CD4-positive, alpha-beta T cell (primary cell): ENCODE measurements at regions of chr3 and their contacts with region 1.

Region 1: DNA sequence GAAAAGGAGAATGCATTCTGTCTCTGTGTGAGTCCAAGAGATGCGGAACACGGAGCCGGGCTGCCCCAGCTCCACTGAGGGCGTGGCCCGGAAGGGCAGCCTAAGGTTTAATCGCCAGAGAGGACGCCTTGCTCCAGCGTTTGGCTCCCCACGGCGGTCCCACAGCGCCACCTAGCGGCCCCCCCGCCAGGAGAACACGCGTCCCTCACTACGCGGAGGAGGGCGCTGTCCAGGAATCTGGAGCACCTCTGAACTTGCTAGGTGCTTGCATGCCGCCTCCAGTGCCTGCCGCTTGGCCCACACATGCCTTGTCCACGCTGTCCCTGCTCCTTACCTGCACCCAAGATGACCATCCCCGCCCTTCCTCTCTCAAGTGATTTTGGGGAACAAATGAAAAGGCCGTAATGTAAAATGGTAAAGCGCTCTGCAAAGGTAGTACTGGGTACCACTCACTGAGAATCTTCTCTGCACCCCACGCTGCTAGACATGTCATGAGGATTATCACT is 14.4 kb upstream of the MRPS22 start:
- DNase-seq: peak; percentile 74 to 91 (median 84)
- ATAC-seq: peak; percentile 97
- H3K4me3 ChIP-seq: peak overlapping the region; percentile 23
- H3K4me3 Mint-ChIP-seq: peak overlapping the region; percentile 27
- H3K27ac ChIP-seq: no peak overlapping the region
- H3K27ac Mint-ChIP-seq: no peak overlapping the region
- H3K4me1 ChIP-seq: peaks cover 9% of the 10 kb centered on the region
- H3K4me1 Mint-ChIP-seq: peaks cover 17% of the 10 kb centered on the region
- H3K27me3 ChIP-seq: peaks cover 10 to 20% of the 10 kb centered on the region in 2 experiments
- H3K27me3 Mint-ChIP-seq: peaks cover 38% of the 10 kb centered on the region
- CTCF ChIP-seq: peak; percentile 99

Region 2: GRCh38 chr3:138417559-138417982 is 911.8 kb before region 1 on chr3:
- CTCF ChIA-PET with region 1: no interaction called
- POLR2A ChIA-PET with region 1: no interaction called
- intact Hi-C with region 1: loop called in 1 of 2 experiments (anchors 2 kb)
- DNase-seq: peak; percentile 38 to 76 (median 49)
- ATAC-seq: peak; percentile 69
- H3K4me3 ChIP-seq: no peak overlapping the region
- H3K4me3 Mint-ChIP-seq: no peak overlapping the region
- H3K27ac ChIP-seq: no peak overlapping the region
- H3K27ac Mint-ChIP-seq: no peak overlapping the region
- H3K4me1 ChIP-seq: no peaks in the 10 kb centered on the region
- H3K4me1 Mint-ChIP-seq: no peaks in the 10 kb centered on the region
- H3K27me3 ChIP-seq: no peaks in the 10 kb centered on the region
- H3K27me3 Mint-ChIP-seq: peaks cover 22% of the 10 kb centered on the region
- CTCF ChIP-seq: peak; percentile 90

Region 3: DNA sequence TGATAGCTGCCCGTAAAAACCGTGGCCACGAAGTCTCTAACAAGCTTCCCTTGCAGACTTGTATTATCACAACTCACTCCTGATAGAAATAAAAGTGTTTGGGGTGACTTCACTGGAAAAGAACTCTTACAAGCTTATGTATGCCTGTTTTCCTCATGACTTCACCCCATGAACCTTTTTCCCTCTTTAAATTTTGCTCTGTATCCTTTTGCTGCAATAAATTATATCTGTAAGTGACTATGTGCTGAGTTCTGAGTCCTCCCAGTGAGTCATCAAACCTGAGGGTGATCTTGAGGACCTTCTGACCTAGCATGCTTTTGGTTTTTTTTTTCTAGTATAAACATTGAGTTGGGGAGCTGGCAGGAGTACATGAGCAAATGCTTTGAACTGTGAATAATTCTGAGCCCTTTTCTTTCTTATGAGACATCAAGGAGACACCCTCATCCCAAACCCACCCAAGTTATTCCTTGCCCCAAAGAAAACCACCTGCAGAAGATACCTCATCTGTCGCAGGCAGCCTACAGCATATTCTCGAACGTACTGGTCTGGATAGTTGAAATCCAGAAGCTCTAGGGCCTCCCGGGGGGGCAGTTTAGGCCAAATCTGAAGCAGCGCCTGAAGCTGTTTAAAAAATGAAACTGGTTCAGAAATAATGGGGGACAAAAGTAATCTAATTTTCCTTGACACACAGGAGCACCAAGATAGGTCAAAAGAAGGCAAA is 635.0 kb before region 1 on chr3:
- CTCF ChIA-PET with region 1: no interaction called
- POLR2A ChIA-PET with region 1: no interaction called
- intact Hi-C with region 1: loop called in 1 of 2 experiments (anchors 10 kb)
- DNase-seq: no peak
- ATAC-seq: no peak
- H3K4me3 ChIP-seq: no peak overlapping the region
- H3K4me3 Mint-ChIP-seq: no peak overlapping the region
- H3K27ac ChIP-seq: no peak overlapping the region
- H3K27ac Mint-ChIP-seq: no peak overlapping the region
- H3K4me1 ChIP-seq: no peaks in the 10 kb centered on the region
- H3K4me1 Mint-ChIP-seq: no peaks in the 10 kb centered on the region
- H3K27me3 ChIP-seq: no peaks in the 10 kb centered on the region
- H3K27me3 Mint-ChIP-seq: no peaks in the 10 kb centered on the region
- CTCF ChIP-seq: no peak

Region 4: GRCh38 chr3:138935848-138936740 is 393.3 kb before region 1 on chr3:
- CTCF ChIA-PET with region 1: interaction called, 5 read pairs
- POLR2A ChIA-PET with region 1: no interaction called
- intact Hi-C with region 1: loop called (anchors 1 kb)
- DNase-seq: peak; percentile 44 to 83 (median 63)
- ATAC-seq: peak; percentile 82
- H3K4me3 ChIP-seq: peak overlapping the region; percentile 43
- H3K4me3 Mint-ChIP-seq: peak overlapping the region; percentile 80
- H3K27ac ChIP-seq: no peak overlapping the region
- H3K27ac Mint-ChIP-seq: no peak overlapping the region
- H3K4me1 ChIP-seq: peaks cover 47% of the 10 kb centered on the region
- H3K4me1 Mint-ChIP-seq: peaks cover 40% of the 10 kb centered on the region
- H3K27me3 ChIP-seq: peaks cover 75 to 80% of the 10 kb centered on the region in 2 experiments
- H3K27me3 Mint-ChIP-seq: peaks cover 92% of the 10 kb centered on the region
- CTCF ChIP-seq: peak; percentile 95

Region 5: GRCh38 chr3:139111392-139112229 is 217.8 kb before region 1 on chr3:
- CTCF ChIA-PET with region 1: no interaction called
- POLR2A ChIA-PET with region 1: no interaction called
- intact Hi-C with region 1: loop called (anchors 2 kb)
- DNase-seq: peak; percentile 14 to 64 (median 42)
- ATAC-seq: peak; percentile 48
- H3K4me3 ChIP-seq: no peak overlapping the region
- H3K4me3 Mint-ChIP-seq: no peak overlapping the region
- H3K27ac ChIP-seq: no peak overlapping the region
- H3K27ac Mint-ChIP-seq: no peak overlapping the region
- H3K4me1 ChIP-seq: peaks cover 8% of the 10 kb centered on the region
- H3K4me1 Mint-ChIP-seq: peaks cover 7% of the 10 kb centered on the region
- H3K27me3 ChIP-seq: peaks cover 2 to 7% of the 10 kb centered on the region in 2 experiments
- H3K27me3 Mint-ChIP-seq: peaks cover 31% of the 10 kb centered on the region
- CTCF ChIP-seq: peak; percentile 53